Activated naive CD4-positive, alpha-beta T cell treated with anti-CD3 and anti-CD28 coated beads for 36 hours (primary cell): ENCODE measurements at regions of chr14 and their contacts with region 1.

Region 1: DNA sequence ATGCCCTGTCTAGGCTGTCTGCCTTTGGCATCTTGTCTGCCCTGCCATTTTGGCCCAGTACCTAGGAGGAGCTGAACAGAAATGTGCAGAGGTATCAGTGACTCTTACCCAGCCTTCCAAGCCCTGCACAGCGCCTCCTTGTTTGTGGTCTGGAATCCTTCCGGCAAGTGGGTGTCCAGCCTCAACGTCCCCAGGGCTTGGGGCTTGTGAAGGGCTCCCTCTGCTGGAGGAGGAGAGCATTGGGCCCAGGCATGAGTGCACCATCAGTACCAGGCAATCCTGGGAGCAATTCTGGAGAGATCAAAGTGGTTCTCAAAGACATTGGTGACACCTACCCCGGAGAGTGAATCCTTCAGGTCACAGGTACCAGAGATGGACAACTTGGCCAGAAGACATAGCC is 2.4 kb upstream of the TCL1B start:
- DNase-seq: peak; percentile 50
- H3K4me3 Mint-ChIP-seq: no peak overlapping the region
- H3K27ac Mint-ChIP-seq: no peak overlapping the region
- H3K4me1 Mint-ChIP-seq: no peaks in the 10 kb centered on the region
- H3K27me3 Mint-ChIP-seq: peaks cover 16% of the 10 kb centered on the region

Region 2: GRCh38 chr14:95609387-95609990 is 74.3 kb before region 1 on chr14:
- CTCF ChIA-PET with region 1: interaction called, 3 read pairs
- intact Hi-C with region 1: loop called (anchors 1 kb)
- DNase-seq: peak; percentile 27
- H3K4me3 Mint-ChIP-seq: no peak overlapping the region
- H3K27ac Mint-ChIP-seq: no peak overlapping the region
- H3K4me1 Mint-ChIP-seq: no peaks in the 10 kb centered on the region
- H3K27me3 Mint-ChIP-seq: peaks cover 26% of the 10 kb centered on the region